HEK293T (cell line): ENCODE measurements at regions of chr15 and their contacts with region 1.

Region 1: DNA sequence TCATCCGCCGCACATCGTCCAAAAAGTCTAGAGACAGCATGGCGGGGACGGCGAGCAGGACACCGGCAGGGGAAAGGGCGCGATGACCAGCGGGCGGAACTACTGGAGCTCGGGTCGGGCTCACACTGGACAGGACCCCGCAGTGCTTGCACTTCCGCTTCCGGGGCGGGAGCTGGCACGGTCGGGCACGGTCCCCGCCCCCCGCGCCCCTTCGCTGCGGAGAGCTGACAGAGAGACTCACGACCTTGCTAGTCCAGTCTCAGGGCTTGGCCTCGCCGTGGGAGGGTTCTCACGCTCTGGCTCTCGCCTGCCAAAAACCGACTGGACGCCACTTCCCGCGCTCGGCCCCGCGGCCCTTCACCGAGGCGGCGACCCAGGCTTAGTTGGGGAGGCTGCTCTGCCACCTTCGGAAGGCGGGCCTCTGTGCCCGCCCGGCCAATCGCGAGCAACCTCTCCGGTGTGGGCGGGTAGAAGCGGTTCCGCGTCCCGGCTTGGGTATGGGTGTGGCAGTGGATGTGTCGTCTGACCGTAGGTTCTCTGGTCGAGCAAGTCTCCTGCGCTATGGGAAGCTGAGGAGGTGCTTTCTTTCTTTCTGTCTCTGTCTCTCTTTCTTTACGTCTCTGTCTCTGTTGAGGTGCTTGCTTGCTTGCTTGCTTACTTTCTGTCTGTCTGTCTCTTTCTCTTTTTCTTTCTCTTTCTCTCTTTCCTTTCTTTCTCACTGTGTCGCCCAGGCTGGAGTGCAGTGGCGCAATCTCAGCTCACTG is at the start of gene SEC11A:
- DNase-seq: peak; percentile 98

Region 2: DNA sequence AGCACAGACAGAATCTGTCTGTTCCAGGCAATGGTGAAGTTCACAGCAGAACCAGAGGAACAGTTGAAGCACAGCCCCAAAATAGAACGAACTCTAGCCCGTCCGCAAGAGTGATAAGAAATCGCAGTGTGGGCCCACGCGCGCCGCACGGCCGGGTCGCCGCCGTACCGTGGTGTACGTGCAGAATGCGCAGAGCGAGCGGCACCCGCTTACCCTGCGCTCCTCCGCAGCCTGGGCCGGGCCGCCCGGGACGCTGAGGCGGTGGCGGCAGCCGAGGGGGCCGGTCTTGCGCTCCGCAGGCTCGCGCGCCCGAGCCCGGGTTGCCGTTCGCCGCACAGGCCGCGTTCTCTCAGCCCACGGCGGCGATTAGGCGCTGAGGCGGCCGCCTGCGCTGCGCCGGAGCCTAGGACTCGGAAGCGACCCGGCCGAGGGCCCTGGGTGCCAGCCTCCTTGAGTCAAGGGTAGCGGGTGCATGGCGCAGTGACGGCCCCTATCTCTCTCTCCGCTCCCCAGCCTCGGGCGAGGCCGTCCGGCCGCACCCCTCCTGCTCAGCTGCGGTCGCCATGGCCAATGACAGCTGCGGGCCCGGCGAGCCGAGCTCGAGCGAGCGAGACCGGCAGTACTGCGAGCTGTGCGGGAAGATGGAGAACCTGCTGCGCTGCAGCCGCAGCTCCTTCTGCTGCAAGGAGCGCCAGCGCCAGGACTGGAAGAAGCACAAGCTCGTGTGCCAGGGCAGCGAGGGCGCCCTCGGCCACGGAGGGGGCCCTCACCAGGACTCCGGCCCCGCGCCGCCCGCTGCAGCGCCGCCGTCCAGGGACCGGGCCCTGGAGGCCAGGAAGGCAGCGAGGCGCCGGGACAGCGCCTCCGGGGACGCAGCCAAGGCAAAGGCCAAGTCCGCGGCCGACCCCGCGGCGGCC is 82.6 kb before region 1 on chr15:
- CTCF ChIA-PET with region 1: no interaction called
- POLR2A ChIA-PET with region 1: interaction called, 12 read pairs
- DNase-seq: peak; percentile 38

Region 3: GRCh38 chr15:84653910-84654704 is 62.1 kb before region 1 on chr15 and contains the start of gene WDR73:
- CTCF ChIA-PET with region 1: no interaction called
- POLR2A ChIA-PET with region 1: interaction called, 14 read pairs
- DNase-seq: peak; percentile 97

Region 4: DNA sequence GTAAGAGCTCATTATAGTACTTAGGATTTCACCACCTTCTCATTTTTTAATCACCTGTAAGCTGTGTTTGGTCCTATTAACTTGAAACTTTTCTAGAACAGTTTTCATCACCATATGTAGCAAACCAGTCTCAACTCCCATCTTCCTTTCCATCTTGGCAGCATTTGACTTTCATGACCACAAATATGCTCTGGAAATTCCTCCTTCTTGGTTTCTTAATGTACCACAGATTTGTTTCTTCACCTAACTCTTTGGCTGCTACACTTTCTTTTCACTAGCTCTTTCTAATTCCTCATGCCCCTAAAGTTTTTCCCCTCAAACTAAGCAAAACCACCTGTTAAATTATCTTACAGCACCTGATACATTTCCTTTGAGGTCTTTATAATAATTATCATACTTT is 45.0 kb before region 1 on chr15:
- CTCF ChIA-PET with region 1: no interaction called
- POLR2A ChIA-PET with region 1: no interaction called
- DNase-seq: no peak

Region 5: DNA sequence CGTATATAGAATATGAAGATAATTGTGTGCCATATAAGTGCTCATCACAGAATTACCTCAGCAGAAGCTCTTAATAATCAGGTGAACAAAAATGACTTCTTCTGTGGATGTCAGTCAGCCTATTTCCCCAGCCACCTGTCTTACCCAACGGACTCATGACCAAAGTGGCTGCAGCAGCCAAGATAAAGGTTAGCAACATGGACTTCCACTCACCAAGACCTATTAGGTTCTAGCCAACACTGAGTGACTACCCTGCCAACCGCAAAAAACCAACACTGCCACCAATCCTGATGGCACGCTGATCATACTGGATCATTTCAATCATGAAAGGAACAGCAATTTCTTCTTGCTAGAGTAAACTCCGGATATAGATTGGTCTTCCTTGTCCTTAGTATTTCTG is 12.4 kb before region 1 on chr15:
- CTCF ChIA-PET with region 1: no interaction called
- POLR2A ChIA-PET with region 1: interaction called, 17 read pairs
- DNase-seq: no peak

Region 6: GRCh38 chr15:84734794-84735479 is 18.7 kb after region 1 on chr15:
- CTCF ChIA-PET with region 1: no interaction called
- POLR2A ChIA-PET with region 1: interaction called, 25 read pairs
- DNase-seq: peak; percentile 50

Region 7: DNA sequence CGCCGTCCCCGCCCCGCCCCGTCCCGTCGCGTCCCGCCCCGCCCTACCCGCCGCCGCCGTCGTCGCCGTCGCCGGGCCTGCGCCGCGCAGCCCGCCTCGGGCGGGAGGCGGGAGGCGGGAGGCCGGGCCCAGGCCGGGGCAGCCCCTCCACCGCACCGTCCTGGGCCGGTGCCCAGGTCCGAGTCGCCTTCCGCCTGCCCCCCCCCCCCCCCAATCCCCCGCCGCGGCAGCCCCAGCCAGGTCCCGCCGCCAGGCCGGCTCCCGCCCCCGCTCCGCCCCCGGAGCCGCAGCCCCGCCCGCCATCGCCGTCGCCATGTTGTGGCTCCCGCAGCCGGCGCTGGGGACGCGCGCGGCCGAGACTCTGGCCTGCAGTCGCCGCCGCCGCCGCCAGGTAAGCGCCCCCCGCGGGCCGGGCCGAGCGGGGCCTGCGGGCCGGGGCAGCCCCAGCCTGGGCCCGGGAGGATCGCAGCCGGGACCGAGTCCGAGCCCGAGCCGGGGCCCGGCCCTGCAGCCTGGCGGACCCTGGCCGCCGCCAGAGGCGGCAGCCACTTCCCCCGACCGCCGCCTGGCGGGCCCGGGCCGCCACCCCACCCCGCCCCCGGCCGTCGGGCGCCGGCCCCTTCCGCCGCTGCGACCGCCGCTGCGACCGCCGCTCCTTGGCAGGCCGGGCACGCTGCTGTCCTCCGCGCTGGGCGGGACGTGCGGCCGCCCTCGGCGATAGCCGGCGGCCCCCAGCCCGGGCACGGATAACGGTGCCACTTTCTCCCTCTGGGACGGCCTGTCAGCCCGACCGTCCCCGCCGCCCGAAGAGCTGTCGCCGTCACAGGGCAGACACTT is 32.3 kb after region 1 on chr15 and contains the start of gene ZNF592:
- CTCF ChIA-PET with region 1: interaction called, 3 read pairs
- POLR2A ChIA-PET with region 1: interaction called, 28 read pairs
- DNase-seq: peak; percentile 82

Region 8: GRCh38 chr15:84773716-84774115 is 57.5 kb after region 1 on chr15:
- CTCF ChIA-PET with region 1: no interaction called
- POLR2A ChIA-PET with region 1: no interaction called
- DNase-seq: no peak

Region 9: GRCh38 chr15:85005319-85005718 is 289.1 kb after region 1 on chr15:
- CTCF ChIA-PET with region 1: no interaction called
- POLR2A ChIA-PET with region 1: no interaction called
- DNase-seq: no peak